Activated T-helper 2 cell treated with anti-CD3 and anti-CD28 coated beads, Interferon-gamma antibody, Interleukin-2, Interleukin-4, amounts not matched to agents 10 μg/mL and 5 μg/mL and 100 μg/mL, durations not matched to agents 14 hours and 24 hours and 36 hours (primary cell): ENCODE measurements at regions of chr14 and their contacts with region 1.

Region 1: DNA sequence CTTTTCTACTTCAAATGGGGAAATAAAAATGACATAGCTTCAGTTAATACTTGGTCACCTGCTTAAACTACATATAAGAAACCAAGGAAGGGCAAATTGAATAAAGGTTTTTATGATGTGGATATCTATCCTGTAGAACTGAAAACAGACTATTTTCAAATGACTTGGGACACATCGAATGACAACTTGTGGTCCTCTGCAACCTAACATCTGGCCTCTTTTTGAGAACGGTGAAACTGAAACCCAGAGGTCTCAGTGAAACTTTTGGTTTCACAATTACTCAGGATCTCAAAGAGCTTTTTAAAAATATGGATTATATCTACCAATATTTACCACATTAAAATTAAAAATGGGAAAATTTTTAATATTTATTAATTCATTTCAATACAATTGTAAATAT is 65.2 kb downstream of the PPP2R5E start:
- DNase-seq: peak; percentile 26
- H3K4me3 Mint-ChIP-seq: no peak overlapping the region
- H3K27ac Mint-ChIP-seq: peak overlapping the region; percentile 43
- H3K4me1 Mint-ChIP-seq: peaks cover 38% of the 10 kb centered on the region
- H3K27me3 Mint-ChIP-seq: no peaks in the 10 kb centered on the region

Region 2: DNA sequence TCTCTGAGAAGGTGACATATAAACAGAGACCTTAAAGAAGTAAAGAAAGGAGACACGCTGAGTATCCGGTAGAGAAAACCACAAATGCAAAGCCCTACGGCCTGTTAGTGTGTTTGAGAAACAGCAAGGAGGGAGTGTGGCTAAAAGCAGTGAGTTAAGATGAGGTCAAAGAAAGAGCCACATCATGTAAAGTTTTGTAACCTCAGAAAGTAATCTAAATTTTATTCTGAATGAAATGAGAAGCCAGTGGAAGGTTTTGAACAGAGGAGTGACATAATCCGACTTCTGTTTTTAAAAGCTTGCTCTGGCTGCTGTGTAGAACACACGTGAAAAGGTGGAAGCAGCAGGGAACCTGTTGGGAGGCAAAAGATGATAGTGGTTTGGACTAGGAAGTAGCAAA is 32.5 kb after region 1 on chr14:
- intact Hi-C with region 1: loop called (anchors 1 kb)
- DNase-seq: no peak
- H3K4me3 Mint-ChIP-seq: peak overlapping the region; percentile 35
- H3K27ac Mint-ChIP-seq: peak overlapping the region; percentile 53
- H3K4me1 Mint-ChIP-seq: peaks cover 42% of the 10 kb centered on the region
- H3K27me3 Mint-ChIP-seq: no peaks in the 10 kb centered on the region

Region 3: GRCh38 chr14:63551332-63551731 is 73.3 kb after region 1 on chr14:
- intact Hi-C with region 1: no loop called
- DNase-seq: no peak
- H3K4me3 Mint-ChIP-seq: no peak overlapping the region
- H3K27ac Mint-ChIP-seq: no peak overlapping the region
- H3K4me1 Mint-ChIP-seq: peaks cover 6% of the 10 kb centered on the region
- H3K27me3 Mint-ChIP-seq: peaks cover 1% of the 10 kb centered on the region